Thyroid gland (tissue), 4 donors: ENCODE measurements at regions of chr12 and their contacts with region 1.

Region 1: DNA sequence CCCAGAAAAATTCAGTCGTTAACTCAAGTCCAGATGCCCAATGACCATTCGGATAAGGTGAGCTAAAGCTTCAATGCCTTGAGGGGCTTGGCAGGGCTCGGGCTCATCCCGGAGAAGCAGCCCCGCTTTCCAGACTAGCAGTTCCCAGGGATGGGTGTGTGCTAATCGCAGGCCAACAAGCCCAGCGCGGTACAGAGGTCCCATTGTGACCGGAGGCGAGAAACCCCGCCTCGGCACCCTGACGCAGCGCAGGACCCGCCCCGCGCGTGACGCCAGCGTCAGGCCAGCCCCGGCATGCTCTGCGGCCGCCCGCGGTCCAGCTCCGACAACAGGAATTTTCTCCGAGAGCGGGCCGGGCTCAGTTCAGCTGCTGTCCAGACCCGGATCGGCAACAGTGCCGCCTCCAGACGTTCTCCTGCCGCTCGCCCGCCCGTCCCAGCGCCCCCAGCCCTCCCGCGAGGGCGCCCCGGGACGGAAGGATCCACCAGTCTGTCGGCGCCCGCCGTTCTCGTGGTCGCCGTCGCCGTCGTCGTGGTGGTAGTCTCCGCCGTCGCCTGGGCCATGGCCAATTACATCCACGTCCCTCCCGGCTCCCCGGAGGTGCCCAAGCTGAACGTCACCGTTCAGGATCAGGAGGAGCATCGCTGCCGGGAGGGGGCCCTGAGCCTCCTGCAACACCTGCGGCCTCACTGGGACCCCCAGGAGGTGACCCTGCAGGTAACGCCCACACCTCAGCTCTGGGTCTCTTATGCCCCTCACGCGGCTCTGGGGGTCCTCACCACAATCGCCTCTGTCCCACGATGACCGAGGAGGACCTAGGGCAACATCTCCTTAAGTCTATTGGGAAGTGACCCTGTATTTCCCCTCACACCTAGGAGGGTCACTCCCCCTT is at the start of gene ETNK1:
- DNase-seq: peak; percentile 95
- H3K4me3 ChIP-seq: peak within 1 kb of the TSS; percentile 56 to 98 (median 96)
- H3K27ac ChIP-seq: peak within 1 kb of the TSS; percentile 93 to 99 (median 98)
- H3K4me1 ChIP-seq: peaks cover 16 to 23% of the 10 kb centered on the region in 2 donors
- H3K27me3 ChIP-seq: no peaks in the 10 kb centered on the region
- CTCF ChIP-seq: no peak
- POLR2A ChIP-seq: peak; percentile 91 to 99
- total RNA-seq, gene ETNK1: 50.0 to 78.2 (median 57.4) TPM

Region 2: GRCh38 chr12:22437031-22437780 is 187.9 kb before region 1 on chr12:
- intact Hi-C with region 1: no loop called
- DNase-seq: peak in 1 of 2 donors; percentile 39
- H3K4me3 ChIP-seq: no peak overlapping the region
- H3K27ac ChIP-seq: no peak overlapping the region
- H3K4me1 ChIP-seq: no peaks in the 10 kb centered on the region
- H3K27me3 ChIP-seq: no peaks in the 10 kb centered on the region
- CTCF ChIP-seq: no peak
- POLR2A ChIP-seq: no peak

Region 3: GRCh38 chr12:22544038-22544979 is 80.8 kb before region 1 on chr12 and contains the start of gene C2CD5:
- intact Hi-C with region 1: loop called (anchors 10 kb)
- DNase-seq: peak; percentile 97 to 99
- H3K4me3 ChIP-seq: peak within 1 kb of the TSS; percentile 72 to 84 (median 76)
- H3K27ac ChIP-seq: peak within 1 kb of the TSS; percentile 94 to 97 (median 95)
- H3K4me1 ChIP-seq: peaks cover 14 to 29% of the 10 kb centered on the region in 2 donors
- H3K27me3 ChIP-seq: no peaks in the 10 kb centered on the region
- CTCF ChIP-seq: peak in 5 of 6 experiments; percentile 12 to 56 (median 38)
- POLR2A ChIP-seq: peak in 1 of 2 donors; percentile 80
- total RNA-seq, gene C2CD5: 52.7 to 77.4 (median 55.8) TPM